ENCODE measurements at regions of chr1 and their contacts with region 1.

Region 1: DNA sequence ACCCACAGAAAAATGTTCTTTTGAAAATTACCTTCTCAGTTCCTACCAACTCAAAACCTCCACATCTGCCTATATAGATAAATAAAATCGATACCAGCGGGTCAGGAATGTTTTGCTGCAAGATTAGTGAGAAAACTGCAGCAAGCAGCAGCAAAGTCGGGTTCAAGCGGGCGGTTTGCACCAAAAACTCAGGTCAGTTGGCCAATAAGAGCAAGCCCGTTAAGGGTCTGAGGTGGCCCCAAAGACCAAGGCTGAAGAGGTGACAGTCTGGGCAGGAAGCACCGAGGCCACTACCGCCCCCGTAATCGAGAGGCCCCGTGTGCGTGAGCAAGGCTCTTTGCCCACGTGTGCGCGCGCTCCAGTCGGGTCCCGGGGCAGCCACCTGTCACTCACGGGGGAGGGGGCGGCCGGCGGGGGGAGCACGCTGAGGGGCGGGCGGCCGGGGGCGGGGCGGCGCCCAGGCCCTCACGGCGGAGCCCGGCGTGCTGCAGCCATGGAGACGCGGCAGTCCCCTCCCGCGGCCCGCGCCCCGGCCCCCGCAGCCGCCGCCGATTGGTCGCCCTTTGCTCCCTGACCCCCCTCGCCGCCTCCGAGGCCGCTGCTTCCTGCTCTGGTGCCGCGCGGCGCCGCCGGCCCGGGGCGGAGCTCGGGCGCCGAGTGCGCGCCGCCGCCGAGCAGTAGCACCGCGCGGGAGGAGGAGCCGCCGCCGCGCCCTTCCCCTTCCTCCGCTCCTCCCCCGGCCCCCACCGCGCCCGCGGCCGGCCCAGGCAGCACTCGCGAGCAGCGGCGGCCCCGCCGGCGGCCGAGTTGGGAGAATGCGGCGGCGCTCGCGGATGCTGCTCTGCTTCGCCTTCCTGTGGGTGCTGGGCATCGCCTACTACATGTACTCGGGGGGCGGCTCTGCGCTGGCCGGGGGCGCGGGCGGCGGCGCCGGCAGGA is at the start of gene GALNT2:
- DNase-seq: peak; percentile 79
- H3K4me3 ChIP-seq: peak within 1 kb of the TSS; percentile 42 to 71 (median 54)
- H3K27ac ChIP-seq: peak within 1 kb of the TSS; percentile 47
- H3K4me1 ChIP-seq: peaks cover 11% of the 10 kb centered on the region
- H3K27me3 ChIP-seq: peaks cover 0 to under 1% of the 10 kb centered on the region in 2 experiments
- CTCF ChIP-seq: no peak
- POLR2A ChIP-seq: peak; percentile 81
- total RNA-seq, gene GALNT2: 71.7 and 77.5 TPM in 2 replicates

Region 2: DNA sequence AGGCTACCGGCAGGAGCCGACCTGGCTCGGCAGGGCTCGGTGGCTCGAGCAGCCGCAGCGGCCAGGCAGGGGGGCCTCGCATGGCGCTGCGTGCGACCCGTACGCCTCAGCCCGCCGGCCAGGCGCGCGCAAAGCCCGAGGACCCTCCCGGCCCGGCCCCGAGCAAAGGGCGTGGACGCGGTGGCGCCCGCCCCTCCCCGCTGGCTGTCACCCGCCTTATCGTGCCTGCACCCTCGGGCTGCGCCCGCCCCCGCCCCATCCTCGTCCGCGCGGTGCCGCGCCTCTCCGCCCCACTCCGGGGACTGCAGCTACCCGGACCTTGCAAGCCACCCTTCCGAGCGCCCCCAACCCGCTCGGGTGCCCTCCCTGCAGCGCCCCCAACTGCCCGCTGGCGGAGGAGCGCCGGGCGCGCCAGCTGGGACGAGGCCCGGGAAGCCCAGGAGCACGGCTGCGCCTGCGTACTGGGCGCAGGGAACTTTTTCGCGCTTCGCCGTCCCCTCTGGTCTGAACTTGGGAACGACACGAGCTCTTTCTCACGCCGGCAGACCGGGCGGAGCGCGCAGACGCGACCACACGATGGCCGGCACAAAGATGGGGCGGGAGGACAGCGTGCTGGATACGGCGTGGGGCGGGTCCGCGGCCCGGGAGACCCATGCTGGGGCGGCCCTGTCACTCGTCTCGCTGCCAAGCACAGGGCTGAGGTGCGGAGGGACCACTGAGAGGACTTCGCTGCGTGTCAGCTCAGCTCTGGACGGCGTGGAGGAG is 508.0 kb before region 1 on chr1 and contains the start of gene ABCB10:
- CTCF ChIA-PET with region 1: no interaction called
- POLR2A ChIA-PET with region 1: no interaction called
- dilution Hi-C with region 1: no loop called
- intact Hi-C with region 1: loop called (anchors 2 kb)
- DNase-seq: peak; percentile 99
- H3K4me3 ChIP-seq: peak within 1 kb of the TSS; percentile 83 to 84 (median 84)
- H3K27ac ChIP-seq: peak within 1 kb of the TSS; percentile 6
- H3K4me1 ChIP-seq: peaks cover 15% of the 10 kb centered on the region
- H3K27me3 ChIP-seq: no peaks in the 10 kb centered on the region
- CTCF ChIP-seq: peak; percentile 86 to 97
- POLR2A ChIP-seq: no peak
- total RNA-seq, gene ABCB10: 19.4 and 19.8 TPM in 2 replicates

Region 3: GRCh38 chr1:230084138-230084880 is 17.6 kb after region 1 on chr1:
- CTCF ChIA-PET with region 1: interaction called, 4 read pairs
- POLR2A ChIA-PET with region 1: no interaction called
- dilution Hi-C with region 1: no loop called
- intact Hi-C with region 1: loop called (anchors 1 kb)
- DNase-seq: peak; percentile 75
- H3K4me3 ChIP-seq: no peak overlapping the region
- H3K27ac ChIP-seq: peak overlapping the region; percentile 75
- H3K4me1 ChIP-seq: peaks cover 20% of the 10 kb centered on the region
- H3K27me3 ChIP-seq: no peaks in the 10 kb centered on the region
- CTCF ChIP-seq: no peak
- POLR2A ChIP-seq: no peak

Region 4: GRCh38 chr1:230160957-230161771 is 94.4 kb after region 1 on chr1:
- CTCF ChIA-PET with region 1: no interaction called
- POLR2A ChIA-PET with region 1: no interaction called
- dilution Hi-C with region 1: no loop called
- intact Hi-C with region 1: loop called (anchors 1 kb)
- DNase-seq: peak; percentile 93
- H3K4me3 ChIP-seq: no peak overlapping the region
- H3K27ac ChIP-seq: no peak overlapping the region
- H3K4me1 ChIP-seq: peaks cover 15% of the 10 kb centered on the region
- H3K27me3 ChIP-seq: peaks cover 0 to 5% of the 10 kb centered on the region in 2 experiments
- CTCF ChIP-seq: no peak
- POLR2A ChIP-seq: no peak

Region 5: DNA sequence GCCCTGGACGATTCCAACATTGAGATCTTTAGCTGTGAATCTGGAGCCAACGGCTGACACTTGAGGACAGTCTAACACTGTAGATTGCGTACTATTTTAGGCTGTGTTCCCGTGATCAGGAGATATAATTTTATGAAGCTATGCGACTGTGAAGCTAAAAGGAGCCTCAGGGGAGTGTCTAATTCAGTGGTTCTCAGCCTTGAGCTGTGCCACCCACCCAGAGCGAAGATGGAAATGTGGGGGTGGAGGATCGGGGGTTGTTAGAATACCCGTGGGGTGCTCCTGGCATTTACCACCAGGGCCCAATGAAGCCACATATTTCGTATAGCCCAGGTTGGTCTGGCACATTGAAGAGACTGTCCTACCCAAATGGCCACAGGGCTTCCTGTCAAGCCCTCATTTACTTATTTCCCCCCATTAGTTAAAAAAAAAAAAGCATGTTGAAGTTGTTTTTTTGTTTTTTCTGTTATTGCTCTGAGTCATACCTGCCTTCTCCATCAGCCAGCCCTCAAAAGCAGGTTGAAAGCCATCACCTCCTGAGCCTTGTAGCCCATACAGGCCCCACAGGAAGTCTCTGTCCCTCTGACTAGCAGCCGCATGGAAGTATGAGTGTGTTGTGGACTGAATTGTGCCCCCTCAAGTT is 142.0 kb after region 1 on chr1:
- CTCF ChIA-PET with region 1: interaction called, 3 read pairs
- POLR2A ChIA-PET with region 1: no interaction called
- dilution Hi-C with region 1: no loop called
- intact Hi-C with region 1: loop called (anchors 1 kb)
- DNase-seq: no peak
- H3K4me3 ChIP-seq: no peak overlapping the region
- H3K27ac ChIP-seq: peak overlapping the region; percentile 83
- H3K4me1 ChIP-seq: peaks cover 38% of the 10 kb centered on the region
- H3K27me3 ChIP-seq: no peaks in the 10 kb centered on the region
- CTCF ChIP-seq: no peak
- POLR2A ChIP-seq: no peak

Region 6: DNA sequence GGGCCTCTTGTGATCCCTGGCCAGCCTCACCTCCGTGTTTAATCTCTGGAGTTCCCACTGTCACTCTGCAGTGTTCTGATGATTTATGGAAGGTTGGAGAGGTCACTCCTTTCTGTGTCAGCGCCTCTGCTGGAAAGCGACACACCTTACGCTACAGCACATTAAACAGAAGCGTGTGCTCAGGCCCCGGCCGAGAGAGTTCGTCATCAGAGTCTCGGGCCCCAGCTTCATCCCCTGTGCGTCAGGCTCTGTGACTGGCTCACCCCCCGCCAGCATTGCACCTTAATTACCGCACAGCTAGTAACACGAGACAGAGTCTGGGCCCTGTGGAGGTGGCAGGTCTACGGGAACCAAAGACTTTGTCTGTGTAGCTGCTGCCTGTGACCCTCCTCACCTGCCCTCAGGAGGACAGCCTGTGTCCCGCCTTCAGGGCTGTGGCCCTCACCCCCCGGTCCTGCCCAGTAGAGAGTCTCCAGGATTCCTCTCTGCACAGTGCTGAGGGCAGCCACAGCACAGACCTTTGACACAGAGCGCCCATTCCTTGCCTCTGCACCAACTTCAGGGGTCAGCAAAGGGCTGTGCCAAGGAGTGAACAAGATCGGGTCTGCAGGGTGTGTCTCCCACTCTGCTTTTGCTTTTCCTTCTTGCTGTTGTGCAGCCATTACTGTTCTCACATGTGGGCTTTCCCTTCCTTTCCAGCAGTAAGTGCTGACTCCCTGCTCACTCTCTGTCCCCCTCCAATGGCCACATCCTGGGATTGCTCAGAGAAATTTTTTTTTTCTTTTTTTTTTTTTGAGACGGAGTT is 201.8 kb after region 1 on chr1:
- CTCF ChIA-PET with region 1: no interaction called
- POLR2A ChIA-PET with region 1: no interaction called
- dilution Hi-C with region 1: no loop called
- intact Hi-C with region 1: loop called (anchors 1 kb)
- DNase-seq: peak; percentile 64
- H3K4me3 ChIP-seq: no peak overlapping the region
- H3K27ac ChIP-seq: no peak overlapping the region
- H3K4me1 ChIP-seq: peaks cover 16% of the 10 kb centered on the region
- H3K27me3 ChIP-seq: no peaks in the 10 kb centered on the region
- CTCF ChIP-seq: peak; percentile 51 to 68
- POLR2A ChIP-seq: no peak